ENCODE measurements at regions of chr18 and their contacts with region 1.

Region 1: GRCh38 chr18:56748698-56749268 is 97.6 kb downstream of the WDR7 start:
- DNase-seq: no peak
- H3K4me3 ChIP-seq: no peak overlapping the region
- H3K27ac ChIP-seq: peak overlapping the region in 1 of 59 donors; percentile 31
- H3K27me3 ChIP-seq: no peaks in the 10 kb centered on the region
- CTCF ChIP-seq: peak; percentile 56 to 94 (median 76)

Region 2: GRCh38 chr18:56576826-56577573 is 171.8 kb before region 1 on chr18:
- intact Hi-C with region 1: no loop called
- DNase-seq: peak in 6 of 10 donors; percentile 42 to 72 (median 48)
- H3K4me3 ChIP-seq: peak overlapping the region in 24 of 59 donors; percentile 0 to 52 (median 24)
- H3K27ac ChIP-seq: peak overlapping the region in 22 of 59 donors; percentile 3 to 62 (median 22)
- H3K27me3 ChIP-seq: no peaks in the 10 kb centered on the region
- CTCF ChIP-seq: no peak

Region 3: DNA sequence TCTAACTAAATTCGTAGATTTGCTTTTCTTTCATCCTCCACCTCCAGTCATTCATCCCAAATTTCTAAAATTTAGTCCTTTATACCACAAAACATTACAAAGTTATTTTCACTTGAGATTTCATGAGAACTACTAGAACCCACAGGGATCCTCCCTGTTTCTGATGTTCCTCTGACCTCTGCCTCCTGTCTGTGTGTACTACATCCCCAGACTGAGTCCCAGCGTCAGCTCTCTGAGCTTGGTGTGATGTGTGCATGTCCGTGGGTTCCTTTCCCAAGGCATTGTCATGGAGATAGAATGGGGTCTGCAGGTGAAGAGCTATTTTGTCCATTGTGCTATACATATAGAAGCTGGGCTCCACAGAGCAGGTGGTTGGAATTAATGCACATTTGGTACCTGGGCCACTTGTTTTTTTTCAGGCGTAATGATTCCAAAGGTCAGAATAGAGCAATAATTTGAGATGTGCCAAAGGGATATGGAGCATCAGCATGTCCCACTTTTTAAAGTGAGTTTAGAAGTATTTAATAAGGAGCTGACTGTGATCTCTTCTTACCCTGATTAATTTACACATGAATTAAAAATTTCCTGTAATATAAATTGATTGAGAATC is 246.9 kb after region 1 on chr18:
- intact Hi-C with region 1: loop called in 1 of 2 experiments (anchors 5 kb)
- DNase-seq: peak in 2 of 10 donors; percentile 17 to 33
- H3K4me3 ChIP-seq: no peak overlapping the region
- H3K27ac ChIP-seq: no peak overlapping the region
- H3K27me3 ChIP-seq: no peaks in the 10 kb centered on the region
- CTCF ChIP-seq: peak in 49 of 56 donors; percentile 17 to 77 (median 44)

Region 4: DNA sequence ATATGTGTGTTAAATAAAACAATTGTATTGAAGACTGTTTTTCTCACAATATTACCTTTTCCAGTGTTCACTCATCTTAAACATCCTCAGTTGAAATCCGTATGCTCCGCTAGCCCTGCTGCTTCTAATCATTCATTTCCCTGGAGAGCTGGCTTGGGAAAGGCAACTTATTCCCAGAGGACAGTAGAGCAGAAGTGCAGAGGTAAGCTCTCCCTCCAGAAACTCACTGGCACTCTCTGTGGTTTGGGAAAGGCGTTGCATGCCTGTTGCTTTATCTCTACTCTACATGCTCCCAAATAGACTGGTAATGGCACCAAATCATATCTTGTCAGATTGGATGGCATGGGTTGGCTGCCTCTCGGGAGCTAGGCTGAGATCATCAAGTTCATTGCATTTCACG is 281.0 kb after region 1 on chr18:
- intact Hi-C with region 1: no loop called
- DNase-seq: no peak
- H3K4me3 ChIP-seq: no peak overlapping the region
- H3K27ac ChIP-seq: no peak overlapping the region
- H3K27me3 ChIP-seq: no peaks in the 10 kb centered on the region
- CTCF ChIP-seq: no peak

Region 5: GRCh38 chr18:57434536-57435494 is 686.0 kb after region 1 on chr18 and contains the start of gene ONECUT2:
- intact Hi-C with region 1: loop called (anchors 5 to 10 kb)
- DNase-seq: peak; percentile 69 to 99 (median 88)
- H3K4me3 ChIP-seq: peak within 1 kb of the TSS; percentile 30 to 77 (median 57)
- H3K27ac ChIP-seq: no peak within 1 kb of the TSS
- H3K27me3 ChIP-seq: peaks cover 33 to 96% (median 90%) of the 10 kb centered on the region in 45 donors
- CTCF ChIP-seq: no peak
- total RNA-seq, gene ONECUT2: 0.25 to 10.4 (median 3.1) TPM

Region 6: DNA sequence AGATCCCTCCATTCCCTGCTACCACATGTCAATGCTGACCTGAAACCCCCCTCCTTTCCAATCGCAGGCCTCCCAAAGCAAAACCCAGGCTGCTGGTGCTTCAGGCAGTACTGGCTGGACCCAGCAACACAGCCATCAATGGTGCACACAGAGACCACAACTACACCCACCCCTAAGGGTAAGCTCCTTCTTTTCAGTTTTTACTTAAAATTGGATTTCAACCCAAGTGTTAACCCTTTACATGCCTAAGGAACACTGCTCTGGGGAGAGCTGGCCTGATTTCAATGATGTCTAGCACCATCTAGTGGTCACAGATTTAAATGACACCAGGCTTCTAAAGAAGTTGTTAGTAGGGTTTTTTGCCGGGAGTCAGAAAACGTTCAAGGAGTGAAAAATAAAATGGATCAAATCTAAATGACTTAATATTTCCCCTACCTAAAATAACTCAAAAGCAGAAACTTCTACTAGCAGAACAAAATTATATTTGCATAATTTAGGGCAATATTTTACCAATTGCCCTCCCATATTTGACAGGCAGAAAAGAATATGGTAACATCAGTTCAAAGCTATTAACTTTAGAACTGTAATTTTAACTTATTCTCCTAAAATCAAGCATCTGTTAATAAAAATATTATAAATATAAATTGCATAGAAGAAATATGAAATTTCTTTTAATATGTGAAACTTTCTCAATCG is 813.1 kb after region 1 on chr18:
- intact Hi-C with region 1: loop called (anchors 5 to 10 kb)
- DNase-seq: peak in 1 of 10 donors; percentile 24
- H3K4me3 ChIP-seq: peak overlapping the region in 33 of 59 donors; percentile 2 to 51 (median 24)
- H3K27ac ChIP-seq: peak overlapping the region in 28 of 59 donors; percentile 0 to 69 (median 36)
- H3K27me3 ChIP-seq: no peaks in the 10 kb centered on the region
- CTCF ChIP-seq: peak; percentile 67 to 93 (median 86)

Region 7: GRCh38 chr18:57569133-57569532 is 820.4 kb after region 1 on chr18:
- intact Hi-C with region 1: loop called (anchors 5 to 10 kb)
- DNase-seq: no peak
- H3K4me3 ChIP-seq: no peak overlapping the region
- H3K27ac ChIP-seq: no peak overlapping the region
- H3K27me3 ChIP-seq: no peaks in the 10 kb centered on the region
- CTCF ChIP-seq: no peak

Measured in dorsolateral prefrontal cortex (tissue), 120 donors.